CD14-positive monocyte (primary cell): ENCODE measurements at regions of chr9 and their contacts with region 1.

Region 1: GRCh38 chr9:127763918-127764384 is 14.5 kb downstream of the SH2D3C start:
- DNase-seq: peak; percentile 63 to 68 (median 66)
- H3K4me3 ChIP-seq: no peak overlapping the region
- H3K4me3 Mint-ChIP-seq: no peak overlapping the region
- H3K27ac ChIP-seq: peak overlapping the region; percentile 30 to 66
- H3K27ac Mint-ChIP-seq: peak overlapping the region; percentile 4 to 83 (median 77)
- H3K4me1 ChIP-seq: peaks cover 41 to 54% of the 10 kb centered on the region in 2 donors
- H3K4me1 Mint-ChIP-seq: peaks cover 68% of the 10 kb centered on the region
- H3K27me3 ChIP-seq: no peaks in the 10 kb centered on the region
- H3K27me3 Mint-ChIP-seq: no peaks in the 10 kb centered on the region
- CTCF ChIP-seq: peak; percentile 73

Region 2: GRCh38 chr9:127723450-127723849 is 40.5 kb before region 1 on chr9:
- intact Hi-C with region 1: no loop called
- DNase-seq: no peak
- H3K4me3 ChIP-seq: no peak overlapping the region
- H3K4me3 Mint-ChIP-seq: no peak overlapping the region
- H3K27ac ChIP-seq: no peak overlapping the region
- H3K27ac Mint-ChIP-seq: no peak overlapping the region
- H3K4me1 ChIP-seq: peaks cover 3 to 13% of the 10 kb centered on the region in 2 donors
- H3K4me1 Mint-ChIP-seq: peaks cover 11% of the 10 kb centered on the region
- H3K27me3 ChIP-seq: no peaks in the 10 kb centered on the region
- H3K27me3 Mint-ChIP-seq: peaks cover 5 to 10% (median 5%) of the 10 kb centered on the region in 3 donors
- CTCF ChIP-seq: no peak

Region 3: GRCh38 chr9:127796225-127796813 is 32.4 kb after region 1 on chr9:
- intact Hi-C with region 1: loop called (anchors 5 kb)
- DNase-seq: no peak
- H3K4me3 ChIP-seq: no peak overlapping the region
- H3K4me3 Mint-ChIP-seq: peak overlapping the region in 1 of 2 donors; percentile 58
- H3K27ac ChIP-seq: no peak overlapping the region
- H3K27ac Mint-ChIP-seq: peak overlapping the region in 3 of 7 donors; percentile 8 to 84 (median 82)
- H3K4me1 ChIP-seq: peaks cover 16 to 18% of the 10 kb centered on the region in 2 donors
- H3K4me1 Mint-ChIP-seq: peaks cover 25% of the 10 kb centered on the region
- H3K27me3 ChIP-seq: no peaks in the 10 kb centered on the region
- H3K27me3 Mint-ChIP-seq: peaks cover 14 to 20% (median 18%) of the 10 kb centered on the region in 3 donors
- CTCF ChIP-seq: no peak